A549 (cell line): ENCODE measurements at regions of chr12 and their contacts with region 1.

Region 1: DNA sequence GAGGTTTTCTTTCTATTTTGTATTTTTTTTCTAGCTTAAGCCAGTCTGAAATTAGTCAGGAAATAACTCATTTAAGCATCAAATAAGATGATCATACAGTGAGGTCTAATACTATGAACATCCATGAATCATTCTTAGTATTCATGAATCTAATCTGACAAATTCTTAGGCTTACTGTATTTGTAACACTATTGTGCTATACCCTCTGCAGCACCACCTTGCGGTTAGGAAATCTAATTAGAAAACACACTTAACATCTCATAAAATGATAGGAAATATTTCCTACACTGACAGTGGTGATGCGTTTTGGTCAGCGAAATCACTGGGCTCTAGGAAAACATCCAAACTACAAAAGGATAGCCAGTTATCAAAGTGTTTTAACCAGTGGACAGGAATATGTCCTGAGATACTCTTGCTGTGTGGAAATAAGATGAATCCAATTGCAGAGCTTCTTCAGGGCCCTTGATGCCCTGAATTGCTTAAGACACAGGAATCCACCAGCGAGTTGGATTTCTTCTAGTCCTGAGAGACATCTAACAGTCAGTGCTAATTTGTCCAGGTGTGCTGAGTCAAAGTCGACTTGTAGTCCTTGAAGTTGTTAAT is 109.3 kb upstream of the MYF6 start:
- DNase-seq: peak in 1 of 2 experiments; percentile 52
- ATAC-seq: peak; percentile 70 to 83; a peak in 5 of 6 replicates
- H3K4me3 ChIP-seq: no peak overlapping the region
- H3K27ac ChIP-seq: no peak overlapping the region
- H3K4me1 ChIP-seq: no peaks in the 10 kb centered on the region
- CTCF ChIP-seq: peak; percentile 60
- EP300 ChIP-seq: no peak
- POLR2A ChIP-seq: no peak
- RAD21 ChIP-seq: peak; percentile 51 to 58; a peak in 3 of 5 replicates

Region 2: GRCh38 chr12:80412369-80412953 is 185.6 kb before region 1 on chr12:
- CTCF ChIA-PET with region 1: interaction called, 10 read pairs
- POLR2A ChIA-PET with region 1: no interaction called
- DNase-seq: peak; percentile 19 to 65
- ATAC-seq: peak; percentile 70 to 89; a peak in 4 of 6 replicates
- H3K4me3 ChIP-seq: no peak overlapping the region
- H3K27ac ChIP-seq: no peak overlapping the region
- H3K4me1 ChIP-seq: no peaks in the 10 kb centered on the region
- CTCF ChIP-seq: peak; percentile 93
- EP300 ChIP-seq: no peak
- POLR2A ChIP-seq: no peak
- RAD21 ChIP-seq: peak; percentile 88 to 89

Region 3: GRCh38 chr12:80580254-80580653 is 17.9 kb before region 1 on chr12:
- CTCF ChIA-PET with region 1: interaction called, 10 read pairs
- POLR2A ChIA-PET with region 1: no interaction called
- DNase-seq: no peak
- ATAC-seq: no peak
- H3K4me3 ChIP-seq: no peak overlapping the region
- H3K27ac ChIP-seq: no peak overlapping the region
- H3K4me1 ChIP-seq: no peaks in the 10 kb centered on the region
- CTCF ChIP-seq: no peak
- EP300 ChIP-seq: no peak
- POLR2A ChIP-seq: no peak
- RAD21 ChIP-seq: no peak

Region 4: GRCh38 chr12:80780746-80781145 is 182.6 kb after region 1 on chr12:
- CTCF ChIA-PET with region 1: no interaction called
- POLR2A ChIA-PET with region 1: no interaction called
- DNase-seq: no peak
- ATAC-seq: no peak
- H3K4me3 ChIP-seq: no peak overlapping the region
- H3K27ac ChIP-seq: no peak overlapping the region
- H3K4me1 ChIP-seq: peaks cover 8% of the 10 kb centered on the region
- CTCF ChIP-seq: no peak
- EP300 ChIP-seq: no peak
- POLR2A ChIP-seq: no peak
- RAD21 ChIP-seq: no peak